Heart right ventricle (tissue), 16 donors: ENCODE measurements at regions of chr15 and their contacts with region 1.

Region 1: DNA sequence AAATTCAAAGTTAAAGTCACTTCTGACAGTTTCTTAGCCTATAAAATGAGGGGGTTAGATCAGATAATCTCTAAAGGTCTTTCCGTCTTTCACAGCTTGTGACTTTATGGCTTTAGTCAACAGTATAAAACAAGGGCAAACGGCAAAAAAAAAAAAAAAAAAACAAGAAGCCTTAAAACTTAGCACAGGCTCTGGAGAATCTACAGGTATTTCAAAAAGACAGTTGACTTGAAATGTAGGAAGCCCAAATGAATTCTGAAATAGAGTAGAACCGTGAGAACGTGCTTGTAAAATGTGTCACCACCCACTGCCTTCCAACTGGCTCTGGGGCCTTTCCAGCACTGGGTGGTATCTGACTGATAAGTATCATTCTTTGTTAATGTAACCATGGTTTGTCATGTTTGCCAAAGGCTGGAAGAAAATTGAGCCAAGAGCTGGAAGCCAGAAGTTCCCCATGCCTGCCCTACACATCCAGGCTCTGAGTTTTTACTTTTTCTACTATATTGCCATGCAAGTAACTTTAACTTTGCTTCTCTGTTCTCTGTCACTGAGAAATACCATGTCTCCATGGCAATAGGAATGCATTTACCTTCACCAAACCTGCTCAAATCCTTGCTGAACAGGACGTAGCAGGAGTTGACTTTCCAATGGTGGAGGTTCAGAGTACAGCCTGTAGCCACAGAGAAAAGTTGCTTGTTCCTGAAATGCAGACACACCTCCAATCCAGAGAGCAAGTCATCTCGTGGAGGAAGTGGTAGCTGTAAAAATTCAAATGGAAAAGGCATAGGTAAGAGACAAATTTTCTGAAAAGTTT is 35.9 kb upstream of the THSD4 start:
- DNase-seq: peak in 1 of 2 donors; percentile 16
- ATAC-seq: peak in 3 of 8 donors; percentile 38 to 53 (median 46)
- H3K4me3 ChIP-seq: no peak overlapping the region
- H3K27ac ChIP-seq: no peak overlapping the region
- H3K4me1 ChIP-seq: peaks cover 0 to 39% (median 19%) of the 10 kb centered on the region in 9 donors
- H3K27me3 ChIP-seq: no peaks in the 10 kb centered on the region
- CTCF ChIP-seq: no peak

Region 2: GRCh38 chr15:70584838-70585706 is 494.3 kb before region 1 on chr15:
- intact Hi-C with region 1: no loop called
- DNase-seq: no peak
- ATAC-seq: peak in 2 of 8 donors; percentile 48 to 58
- H3K4me3 ChIP-seq: peak overlapping the region in 6 of 10 donors; percentile 13 to 36 (median 26)
- H3K27ac ChIP-seq: no peak overlapping the region
- H3K4me1 ChIP-seq: peaks cover 0 to 11% (median 0%) of the 10 kb centered on the region in 9 donors
- H3K27me3 ChIP-seq: peaks cover 0 to 27% (median 20%) of the 10 kb centered on the region in 7 donors
- CTCF ChIP-seq: peak in 7 of 9 donors; percentile 30 to 55 (median 44)

Region 3: GRCh38 chr15:71024657-71025056 is 54.8 kb before region 1 on chr15:
- intact Hi-C with region 1: loop called in 1 of 10 experiments (anchors 10 kb)
- DNase-seq: no peak
- ATAC-seq: no peak
- H3K4me3 ChIP-seq: no peak overlapping the region
- H3K27ac ChIP-seq: no peak overlapping the region
- H3K4me1 ChIP-seq: no peaks in the 10 kb centered on the region
- H3K27me3 ChIP-seq: no peaks in the 10 kb centered on the region
- CTCF ChIP-seq: no peak